ENCODE measurements at regions of chr10 and their contacts with region 1.

Region 1: GRCh38 chr10:103888113-103888841 is 29.7 kb downstream of the STN1 start:
- DNase-seq: peak; percentile 51
- H3K4me3 ChIP-seq: peak overlapping the region in 1 of 2 experiments; percentile 0; a peak in 1 of 4 replicates
- H3K27ac ChIP-seq: peak overlapping the region; percentile 43 to 70
- H3K4me1 ChIP-seq: peaks cover 8 to 18% of the 10 kb centered on the region in 2 experiments; a peak in 2 of 4 replicates
- H3K27me3 ChIP-seq: no peaks in the 10 kb centered on the region
- CTCF ChIP-seq: peak; percentile 94
- EP300 ChIP-seq: no peak
- RAD21 ChIP-seq: peak; percentile 95

Region 2: GRCh38 chr10:103696411-103697145 is 191.7 kb before region 1 on chr10:
- CTCF ChIA-PET with region 1: interaction called, 10 read pairs
- POLR2A ChIA-PET with region 1: no interaction called
- DNase-seq: peak; percentile 46
- H3K4me3 ChIP-seq: no peak overlapping the region
- H3K27ac ChIP-seq: peak overlapping the region in 1 of 2 experiments; percentile 73; a peak in 2 of 4 replicates
- H3K4me1 ChIP-seq: peaks cover 9 to 14% of the 10 kb centered on the region in 2 experiments; a peak in 3 of 4 replicates
- H3K27me3 ChIP-seq: no peaks in the 10 kb centered on the region
- CTCF ChIP-seq: peak; percentile 58
- EP300 ChIP-seq: peak in 1 of 2 experiments; percentile 43; a peak in 1 of 4 replicates
- RAD21 ChIP-seq: no peak

Region 3: DNA sequence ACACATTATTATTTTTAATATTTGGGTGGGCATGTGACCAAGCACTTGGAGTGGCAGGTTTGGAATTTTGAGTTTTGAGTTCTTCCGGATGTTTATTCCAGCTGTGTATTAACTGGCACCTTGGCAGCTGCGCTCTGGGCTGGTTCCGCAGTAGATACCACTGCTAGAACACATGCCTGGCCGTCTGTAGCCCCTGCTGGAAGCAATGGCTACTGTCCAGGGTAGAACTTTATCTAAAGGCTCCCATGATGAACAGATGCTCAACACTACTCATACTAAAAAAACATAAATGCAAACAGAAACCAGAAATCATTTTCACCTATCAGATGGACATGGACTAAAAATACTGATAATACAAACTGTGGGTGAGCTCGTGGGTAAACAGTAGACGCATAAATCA is 13.5 kb before region 1 on chr10:
- CTCF ChIA-PET with region 1: interaction called, 23 read pairs
- POLR2A ChIA-PET with region 1: no interaction called
- DNase-seq: peak; percentile 77
- H3K4me3 ChIP-seq: no peak overlapping the region
- H3K27ac ChIP-seq: peak overlapping the region in 1 of 2 experiments; percentile 88; a peak in 2 of 4 replicates
- H3K4me1 ChIP-seq: peaks cover 0 to 19% of the 10 kb centered on the region in 2 experiments; a peak in 2 of 4 replicates
- H3K27me3 ChIP-seq: no peaks in the 10 kb centered on the region
- CTCF ChIP-seq: no peak
- EP300 ChIP-seq: peak in 1 of 2 experiments; percentile 65; a peak in 1 of 4 replicates
- RAD21 ChIP-seq: peak; percentile 36

Region 4: GRCh38 chr10:103990121-103990520 is 101.8 kb after region 1 on chr10:
- CTCF ChIA-PET with region 1: no interaction called
- POLR2A ChIA-PET with region 1: no interaction called
- DNase-seq: no peak
- H3K4me3 ChIP-seq: no peak overlapping the region
- H3K27ac ChIP-seq: no peak overlapping the region
- H3K4me1 ChIP-seq: no peaks in the 10 kb centered on the region; a peak in 1 of 4 replicates
- H3K27me3 ChIP-seq: no peaks in the 10 kb centered on the region
- CTCF ChIP-seq: no peak
- EP300 ChIP-seq: no peak
- RAD21 ChIP-seq: no peak

Region 5: GRCh38 chr10:104121520-104122224 is 233.4 kb after region 1 on chr10 and contains the start of gene SFR1:
- CTCF ChIA-PET with region 1: interaction called, 44 read pairs
- POLR2A ChIA-PET with region 1: no interaction called
- DNase-seq: peak; percentile 96
- H3K4me3 ChIP-seq: peak within 1 kb of the TSS; percentile 96 to 98
- H3K27ac ChIP-seq: peak within 1 kb of the TSS; percentile 99 to 100
- H3K4me1 ChIP-seq: peaks cover 0 to 11% of the 10 kb centered on the region in 2 experiments; a peak in 3 of 4 replicates
- H3K27me3 ChIP-seq: no peaks in the 10 kb centered on the region
- CTCF ChIP-seq: peak; percentile 68
- EP300 ChIP-seq: peak; percentile 15 to 40; a peak in 2 of 4 replicates
- RAD21 ChIP-seq: peak; percentile 53
- polyA plus RNA-seq, gene SFR1: 1.5 and 1.8 TPM in 2 replicates